Mammary epithelial cell (primary cell): ENCODE measurements at regions of chr2 and their contacts with region 1.

Region 1: GRCh38 chr2:393711-394696 is 106.1 kb upstream of the ALKAL2 start:
- DNase-seq: peak; percentile 46
- H3K4me3 ChIP-seq: no peak overlapping the region
- H3K27ac ChIP-seq: no peak overlapping the region
- H3K4me1 ChIP-seq: no peaks in the 10 kb centered on the region
- H3K27me3 ChIP-seq: no peaks in the 10 kb centered on the region
- CTCF ChIP-seq: no peak

Region 2: GRCh38 chr2:264660-265468 is 129.1 kb before region 1 on chr2 and contains the start of gene ACP1:
- CTCF ChIA-PET with region 1: no interaction called
- dilution Hi-C with region 1: no loop called
- in situ Hi-C with region 1: no loop called
- intact Hi-C with region 1: loop called (anchors 5 kb)
- DNase-seq: peak; percentile 98
- H3K4me3 ChIP-seq: peak within 1 kb of the TSS; percentile 97 to 99 (median 98)
- H3K27ac ChIP-seq: peak within 1 kb of the TSS; percentile 82
- H3K4me1 ChIP-seq: peaks cover 19% of the 10 kb centered on the region
- H3K27me3 ChIP-seq: no peaks in the 10 kb centered on the region
- CTCF ChIP-seq: no peak
- total RNA-seq, gene ACP1: 65.3 to 108 TPM